Colonic mucosa (tissue), 4 donors: ENCODE measurements at regions of chr20 and their contacts with region 1.

Region 1: GRCh38 chr20:17617551-17618223 is 47.8 kb downstream of the DSTN start:
- DNase-seq: peak; percentile 46
- H3K4me3 ChIP-seq: no peak overlapping the region
- H3K27ac ChIP-seq: no peak overlapping the region
- H3K4me1 ChIP-seq: peaks cover 11% of the 10 kb centered on the region
- H3K27me3 ChIP-seq: no peaks in the 10 kb centered on the region
- CTCF ChIP-seq: no peak

Region 2: GRCh38 chr20:17536944-17537444 is 80.7 kb before region 1 on chr20:
- intact Hi-C with region 1: loop called (anchors 1 kb)
- DNase-seq: peak; percentile 79
- H3K4me3 ChIP-seq: no peak overlapping the region
- H3K27ac ChIP-seq: no peak overlapping the region
- H3K4me1 ChIP-seq: no peaks in the 10 kb centered on the region
- H3K27me3 ChIP-seq: no peaks in the 10 kb centered on the region
- CTCF ChIP-seq: peak; percentile 81

Region 3: DNA sequence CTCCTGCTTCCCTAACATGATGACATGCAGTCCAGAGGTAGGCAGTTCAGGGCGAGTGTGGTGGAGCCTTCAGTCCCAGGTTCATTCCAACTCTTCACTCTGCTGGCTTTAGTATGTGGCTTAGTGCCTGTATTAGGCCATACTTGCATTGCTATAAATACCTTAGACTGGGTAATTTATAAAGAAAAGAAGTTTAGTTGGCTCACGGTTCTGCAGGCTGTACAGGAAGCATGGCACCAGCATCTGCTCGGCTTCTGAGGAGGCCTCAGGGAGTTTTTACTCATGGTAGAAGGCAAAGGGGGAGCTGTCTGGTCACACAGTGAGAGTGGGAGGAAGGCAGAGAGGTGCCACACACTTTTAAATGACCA is 66.7 kb before region 1 on chr20:
- intact Hi-C with region 1: no loop called
- DNase-seq: no peak
- H3K4me3 ChIP-seq: no peak overlapping the region
- H3K27ac ChIP-seq: no peak overlapping the region
- H3K4me1 ChIP-seq: no peaks in the 10 kb centered on the region
- H3K27me3 ChIP-seq: no peaks in the 10 kb centered on the region
- CTCF ChIP-seq: no peak

Region 4: DNA sequence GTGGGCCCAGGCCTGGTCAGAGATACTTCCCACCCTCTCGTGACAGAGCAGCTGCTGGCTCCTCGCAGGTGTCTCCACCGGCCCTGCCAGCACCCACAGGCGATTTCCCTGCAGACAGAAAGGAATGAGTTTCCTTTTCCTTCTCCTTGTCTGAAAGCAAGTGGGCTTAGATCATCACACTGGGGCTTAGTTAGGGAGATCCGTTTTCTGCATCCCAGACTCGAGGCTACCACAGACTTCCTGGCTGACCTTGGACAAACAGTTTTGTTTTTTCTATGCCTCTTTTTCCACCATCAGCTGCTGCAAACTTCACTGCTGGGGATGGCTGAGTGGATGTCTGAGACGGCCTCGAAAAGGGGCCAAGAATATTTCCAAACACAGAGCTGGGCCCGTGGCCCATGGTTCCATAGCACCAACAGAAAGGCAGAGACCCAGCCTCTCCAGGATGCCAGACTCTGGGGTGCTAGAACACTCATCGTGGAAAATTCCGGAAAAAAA is 168.6 kb after region 1 on chr20:
- intact Hi-C with region 1: no loop called
- DNase-seq: no peak
- H3K4me3 ChIP-seq: no peak overlapping the region
- H3K27ac ChIP-seq: no peak overlapping the region
- H3K4me1 ChIP-seq: no peaks in the 10 kb centered on the region
- H3K27me3 ChIP-seq: no peaks in the 10 kb centered on the region
- CTCF ChIP-seq: no peak

Region 5: DNA sequence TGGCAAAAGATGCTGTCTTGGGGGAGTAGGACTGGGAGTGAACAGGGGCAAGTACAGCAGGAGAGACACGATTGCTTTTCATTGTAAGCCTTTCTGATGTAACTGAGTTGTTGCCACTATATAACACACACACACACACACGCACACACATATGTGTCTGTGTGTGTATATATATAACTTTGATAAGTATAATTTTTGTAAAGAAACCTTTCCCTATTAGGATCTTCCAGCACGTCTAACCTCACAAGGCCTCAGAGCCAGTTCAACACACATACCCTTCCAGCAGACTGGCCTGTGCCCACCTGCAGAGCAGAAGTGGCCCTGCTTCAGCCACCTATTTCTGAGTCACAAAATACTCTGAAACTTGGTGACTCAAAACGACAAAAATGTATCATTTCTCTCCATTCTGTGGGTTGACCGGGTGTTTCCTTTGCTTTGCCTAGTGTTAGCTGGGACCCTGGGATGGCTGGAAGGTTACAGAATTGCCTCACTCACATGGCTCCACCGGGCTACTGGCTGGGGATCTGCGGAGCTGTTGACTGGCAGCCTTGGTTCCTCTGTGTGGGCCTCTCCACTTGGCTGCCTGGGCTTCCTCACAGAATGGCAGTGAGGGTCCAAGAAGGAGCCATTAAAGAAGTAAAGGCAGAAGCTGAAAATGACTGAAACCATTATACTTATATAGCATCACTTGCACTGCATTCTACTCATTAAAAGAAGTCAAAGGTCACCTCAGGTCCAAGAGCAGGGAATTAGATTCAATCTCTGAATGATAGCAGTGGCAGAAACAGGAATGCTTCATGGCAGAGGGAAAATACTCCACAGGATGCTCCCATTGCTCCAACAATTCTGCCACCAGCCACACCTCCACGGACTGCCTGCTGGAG is 208.5 kb after region 1 on chr20:
- intact Hi-C with region 1: no loop called
- DNase-seq: no peak
- H3K4me3 ChIP-seq: no peak overlapping the region
- H3K27ac ChIP-seq: no peak overlapping the region
- H3K4me1 ChIP-seq: peaks cover 12% of the 10 kb centered on the region
- H3K27me3 ChIP-seq: no peaks in the 10 kb centered on the region
- CTCF ChIP-seq: no peak